ENCODE measurements at regions of chr17 and their contacts with region 1.

Region 1: GRCh38 chr17:28057731-28058279 is 15.3 kb downstream of the NLK start:
- DNase-seq: no peak
- H3K4me3 Mint-ChIP-seq: no peak overlapping the region
- H3K27ac Mint-ChIP-seq: peak overlapping the region; percentile 71
- H3K4me1 Mint-ChIP-seq: peaks cover 30% of the 10 kb centered on the region
- H3K27me3 Mint-ChIP-seq: no peaks in the 10 kb centered on the region

Region 2: DNA sequence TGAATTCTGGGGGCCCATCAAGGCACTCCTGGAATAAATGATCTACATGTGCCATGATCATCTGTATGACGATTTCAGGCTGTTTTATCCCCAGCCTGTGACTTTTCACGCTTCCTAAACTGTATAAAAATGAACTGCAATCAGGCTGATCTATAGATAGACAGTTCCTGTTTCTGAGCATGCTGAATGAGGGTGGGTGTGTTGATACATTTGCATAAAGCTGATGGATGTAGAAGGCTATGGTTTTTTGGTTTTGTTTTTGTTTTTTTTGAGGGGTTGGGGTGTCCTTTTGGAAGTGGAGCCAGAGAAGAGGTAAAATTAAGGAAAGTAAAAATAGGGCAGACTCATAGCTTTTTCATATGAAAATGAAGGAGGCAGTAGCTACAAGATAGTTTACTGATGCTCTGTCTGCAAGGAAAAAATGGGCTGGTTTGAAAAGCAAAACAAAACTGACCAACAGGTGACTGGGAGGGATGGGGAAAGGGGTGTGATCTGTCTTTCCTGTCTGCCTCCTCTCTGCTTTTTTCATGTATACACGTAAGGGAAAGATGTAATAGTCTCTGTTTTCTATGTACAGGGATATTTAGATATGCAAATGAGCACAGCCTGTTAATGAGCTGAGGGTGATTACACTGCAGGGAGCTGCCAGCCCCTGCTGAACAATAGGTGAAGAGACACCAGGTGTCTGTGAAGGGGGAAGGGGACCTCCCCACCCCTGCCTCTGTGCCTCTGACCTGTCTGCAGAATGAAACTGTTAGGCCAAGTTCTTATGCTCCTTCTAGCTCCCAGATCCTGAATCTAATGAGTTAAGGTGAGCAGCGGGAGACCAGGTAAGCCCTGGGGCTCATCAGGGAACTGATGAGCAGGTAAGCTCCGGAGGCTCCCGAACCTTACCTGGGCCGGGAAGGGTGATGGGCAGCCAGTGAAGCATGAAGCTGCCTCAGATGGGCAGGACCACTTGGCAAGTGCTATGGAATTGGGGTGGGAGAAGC is 118.0 kb before region 1 on chr17:
- intact Hi-C with region 1: no loop called
- DNase-seq: no peak
- H3K4me3 Mint-ChIP-seq: no peak overlapping the region
- H3K27ac Mint-ChIP-seq: no peak overlapping the region
- H3K4me1 Mint-ChIP-seq: no peaks in the 10 kb centered on the region
- H3K27me3 Mint-ChIP-seq: peaks cover 11% of the 10 kb centered on the region

Region 3: GRCh38 chr17:28033972-28034714 is 23.7 kb before region 1 on chr17:
- intact Hi-C with region 1: no loop called
- DNase-seq: no peak
- H3K4me3 Mint-ChIP-seq: no peak overlapping the region
- H3K27ac Mint-ChIP-seq: no peak overlapping the region
- H3K4me1 Mint-ChIP-seq: peaks cover 7% of the 10 kb centered on the region
- H3K27me3 Mint-ChIP-seq: peaks cover 17% of the 10 kb centered on the region

Region 4: DNA sequence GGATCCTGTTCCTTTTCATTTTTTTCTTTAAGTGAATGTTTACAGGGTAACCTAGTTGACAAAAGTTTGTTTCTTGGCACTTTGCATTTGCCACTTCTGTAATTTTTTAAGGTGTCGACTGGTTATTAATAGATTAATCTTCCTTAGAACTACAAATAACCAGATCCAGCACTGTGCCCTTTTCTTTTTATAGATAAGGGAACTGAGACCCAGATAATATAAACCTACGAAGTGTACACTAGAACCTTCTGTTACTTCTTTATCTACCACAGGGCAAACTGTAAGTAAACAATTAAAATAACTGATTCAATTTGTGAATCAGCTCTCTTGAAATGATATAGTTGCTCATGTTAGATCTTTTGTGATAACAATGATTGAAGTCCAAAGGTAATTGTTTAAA is 40.1 kb after region 1 on chr17:
- intact Hi-C with region 1: no loop called
- DNase-seq: no peak
- H3K4me3 Mint-ChIP-seq: no peak overlapping the region
- H3K27ac Mint-ChIP-seq: no peak overlapping the region
- H3K4me1 Mint-ChIP-seq: no peaks in the 10 kb centered on the region
- H3K27me3 Mint-ChIP-seq: peaks cover 2% of the 10 kb centered on the region

Region 5: DNA sequence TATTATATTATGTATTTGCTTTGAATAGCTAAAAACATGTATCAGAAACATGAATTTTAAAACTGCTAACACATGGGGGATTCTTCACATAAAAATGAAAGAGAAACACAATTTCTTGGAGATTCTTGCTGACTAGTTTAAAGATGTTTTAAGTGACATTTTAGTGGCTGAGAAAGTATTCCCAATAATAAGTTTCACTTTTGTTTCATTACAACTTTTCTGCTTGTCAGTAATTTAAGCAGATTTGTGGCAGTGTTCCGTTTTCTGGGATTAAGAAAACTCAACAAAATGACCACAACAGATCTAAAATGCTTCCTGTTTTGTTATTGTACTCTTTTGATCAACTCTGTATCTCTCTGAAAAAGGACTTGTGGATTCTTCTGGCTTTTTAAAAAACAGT is 60.6 kb after region 1 on chr17:
- intact Hi-C with region 1: loop called (anchors 5 kb)
- DNase-seq: no peak
- H3K4me3 Mint-ChIP-seq: peak overlapping the region; percentile 2
- H3K27ac Mint-ChIP-seq: peak overlapping the region; percentile 12
- H3K4me1 Mint-ChIP-seq: peaks cover 27% of the 10 kb centered on the region
- H3K27me3 Mint-ChIP-seq: no peaks in the 10 kb centered on the region

Region 6: DNA sequence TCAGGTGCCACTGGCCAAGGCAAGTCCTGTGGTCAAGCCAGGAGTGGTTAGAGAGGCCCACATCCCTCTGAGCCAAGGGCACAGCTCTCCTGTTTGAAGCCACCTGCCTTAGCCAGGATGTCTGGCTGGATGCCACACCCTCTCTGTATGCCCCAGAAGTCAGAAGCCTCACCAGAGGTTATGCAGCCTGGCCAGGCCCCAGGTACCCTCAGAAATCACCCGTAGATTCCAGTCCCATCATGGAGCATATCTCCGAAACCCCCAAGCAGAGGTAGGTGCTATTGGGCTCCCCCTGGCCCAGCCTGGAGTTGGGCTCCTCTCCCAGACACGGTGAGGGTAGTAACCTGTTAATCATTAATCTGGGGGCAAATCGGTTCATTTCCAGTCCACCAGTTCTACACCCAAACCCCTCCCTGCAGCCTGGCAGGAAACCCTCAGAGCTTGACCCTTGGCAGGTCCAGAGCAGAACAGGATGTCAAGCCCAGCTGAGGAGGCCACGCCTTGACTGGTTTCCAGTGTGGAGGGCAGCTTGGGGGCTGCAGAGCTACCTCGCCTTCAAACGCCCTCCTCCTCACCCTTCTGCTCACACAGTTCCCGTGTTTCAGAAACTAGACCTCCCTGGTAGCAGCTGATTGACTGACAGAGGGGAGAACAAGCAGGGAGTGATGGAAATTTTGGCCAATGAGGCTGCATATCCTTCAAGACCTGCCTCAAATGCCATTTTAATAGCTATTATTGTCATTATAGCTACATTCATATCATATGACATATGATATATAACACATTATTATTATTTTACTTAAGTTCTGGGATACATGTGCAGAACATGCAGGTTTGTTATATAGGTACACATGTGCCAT is 200.8 kb after region 1 on chr17:
- intact Hi-C with region 1: no loop called
- DNase-seq: no peak
- H3K4me3 Mint-ChIP-seq: no peak overlapping the region
- H3K27ac Mint-ChIP-seq: no peak overlapping the region
- H3K4me1 Mint-ChIP-seq: no peaks in the 10 kb centered on the region
- H3K27me3 Mint-ChIP-seq: peaks cover 5% of the 10 kb centered on the region

Measured in activated T-helper 2 cell treated with anti-CD3 and anti-CD28 coated beads, Interferon-gamma antibody, Interleukin-2, Interleukin-4, amounts not matched to agents 10 μg/mL and 5 μg/mL and 100 μg/mL, durations not matched to agents 14 hours and 24 hours and 36 hours (primary cell).